PC-9 (cell line): ENCODE measurements at regions of chr13 and their contacts with region 1.

Region 1: DNA sequence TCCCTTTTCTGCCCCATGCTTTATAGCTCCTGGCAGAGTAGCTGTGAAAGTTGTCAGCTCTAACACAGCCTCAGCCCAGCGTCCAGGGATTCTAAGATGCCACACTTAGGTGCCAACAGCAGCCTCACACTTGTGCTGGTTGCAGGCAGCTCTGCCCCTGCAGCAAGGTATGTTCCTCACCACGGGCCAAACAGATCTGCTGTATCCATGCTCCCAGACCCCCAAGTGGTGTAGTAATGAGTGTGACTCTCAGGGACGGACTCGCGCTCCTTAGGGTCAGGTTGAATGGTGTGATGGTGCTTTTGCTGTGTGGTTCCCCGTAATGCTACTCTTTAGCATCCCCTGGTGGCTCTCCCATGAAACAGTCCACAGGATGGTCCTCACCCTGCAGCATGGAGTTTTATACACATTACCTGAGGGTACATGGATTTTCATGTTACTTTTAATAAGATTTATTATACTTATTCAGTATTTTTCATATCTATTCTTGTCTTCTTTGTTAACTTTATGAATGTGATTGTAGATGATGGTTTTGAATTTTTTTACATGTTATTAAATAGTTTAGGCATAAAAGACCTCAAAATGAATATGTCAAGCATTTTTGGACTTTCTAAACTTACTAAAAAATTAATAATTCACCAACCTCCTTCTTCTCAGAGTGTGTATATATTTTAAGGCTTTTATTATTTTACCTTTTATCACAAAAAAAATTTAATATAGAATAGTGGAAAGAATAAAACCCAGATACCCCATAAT is 232.5 kb downstream of the SLC7A1 start:
- DNase-seq: peak in 1 of 2 experiments; percentile 6
- H3K4me3 ChIP-seq: no peak overlapping the region
- H3K27ac ChIP-seq: no peak overlapping the region
- H3K4me1 ChIP-seq: no peaks in the 10 kb centered on the region
- H3K27me3 ChIP-seq: peaks cover 52% of the 10 kb centered on the region
- CTCF ChIP-seq: peak; percentile 84

Region 2: GRCh38 chr13:27744801-27745200 is 1618.2 kb before region 1 on chr13:
- CTCF ChIA-PET with region 1: no interaction called
- POLR2A ChIA-PET with region 1: no interaction called
- intact Hi-C with region 1: no loop called
- DNase-seq: no peak
- H3K4me3 ChIP-seq: no peak overlapping the region
- H3K27ac ChIP-seq: no peak overlapping the region
- H3K4me1 ChIP-seq: no peaks in the 10 kb centered on the region
- H3K27me3 ChIP-seq: peaks cover 96% of the 10 kb centered on the region
- CTCF ChIP-seq: no peak

Region 3: GRCh38 chr13:28805193-28805819 is 557.7 kb before region 1 on chr13:
- CTCF ChIA-PET with region 1: interaction called, 9 read pairs
- POLR2A ChIA-PET with region 1: no interaction called
- intact Hi-C with region 1: loop called (anchors 10 kb)
- DNase-seq: peak in 1 of 2 experiments; percentile 11
- H3K4me3 ChIP-seq: no peak overlapping the region
- H3K27ac ChIP-seq: no peak overlapping the region
- H3K4me1 ChIP-seq: no peaks in the 10 kb centered on the region
- H3K27me3 ChIP-seq: peaks cover 38% of the 10 kb centered on the region
- CTCF ChIP-seq: peak; percentile 75